ENCODE measurements at regions of chr5 and their contacts with region 1.

Region 1: GRCh38 chr5:39074016-39074886 is at the start of gene RICTOR:
- DNase-seq: peak; percentile 94
- H3K4me3 ChIP-seq: peak within 1 kb of the TSS; percentile 91
- H3K27ac ChIP-seq: peak within 1 kb of the TSS; percentile 95
- H3K4me1 ChIP-seq: peaks cover 14% of the 10 kb centered on the region
- H3K27me3 ChIP-seq: no peaks in the 10 kb centered on the region
- CTCF ChIP-seq: no peak
- total RNA-seq, gene RICTOR: 23.3 TPM in 2 replicates

Region 2: GRCh38 chr5:38994324-38994927 is 79.8 kb before region 1 on chr5:
- CTCF ChIA-PET with region 1: interaction called, 3 read pairs
- POLR2A ChIA-PET with region 1: no interaction called
- intact Hi-C with region 1: loop called (anchors 5 kb)
- DNase-seq: peak; percentile 74
- H3K4me3 ChIP-seq: no peak overlapping the region
- H3K27ac ChIP-seq: no peak overlapping the region
- H3K4me1 ChIP-seq: no peaks in the 10 kb centered on the region
- H3K27me3 ChIP-seq: no peaks in the 10 kb centered on the region
- CTCF ChIP-seq: peak; percentile 56